Endothelial cell of umbilical vein (primary cell): ENCODE measurements at regions of chr4 and their contacts with region 1.

Region 1: DNA sequence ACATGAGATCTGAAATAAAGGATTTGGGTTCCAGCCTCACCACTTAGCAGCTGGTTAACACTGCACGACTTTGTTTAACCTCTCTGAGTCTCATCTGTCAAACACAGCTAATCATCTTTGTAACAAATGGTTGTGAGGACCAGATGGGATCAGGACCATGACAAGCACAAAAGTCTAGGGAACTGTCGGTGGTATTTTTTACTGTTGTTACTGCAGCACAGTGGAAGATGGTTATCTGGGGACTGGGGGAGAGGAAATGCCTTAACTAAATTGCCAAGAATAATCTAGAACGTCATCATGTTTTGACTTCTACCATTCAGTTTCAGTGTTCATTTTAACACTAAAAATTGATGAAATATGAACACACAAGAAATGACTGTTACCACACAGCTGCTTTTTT is 99.5 kb downstream of the ADGRA3 start:
- DNase-seq: peak; percentile 82
- H3K4me3 ChIP-seq: no peak overlapping the region
- H3K27ac ChIP-seq: peak overlapping the region; percentile 30
- H3K4me1 ChIP-seq: peaks cover 12% of the 10 kb centered on the region
- H3K27me3 ChIP-seq: no peaks in the 10 kb centered on the region
- CTCF ChIP-seq: no peak
- POLR2A ChIP-seq: no peak

Region 2: DNA sequence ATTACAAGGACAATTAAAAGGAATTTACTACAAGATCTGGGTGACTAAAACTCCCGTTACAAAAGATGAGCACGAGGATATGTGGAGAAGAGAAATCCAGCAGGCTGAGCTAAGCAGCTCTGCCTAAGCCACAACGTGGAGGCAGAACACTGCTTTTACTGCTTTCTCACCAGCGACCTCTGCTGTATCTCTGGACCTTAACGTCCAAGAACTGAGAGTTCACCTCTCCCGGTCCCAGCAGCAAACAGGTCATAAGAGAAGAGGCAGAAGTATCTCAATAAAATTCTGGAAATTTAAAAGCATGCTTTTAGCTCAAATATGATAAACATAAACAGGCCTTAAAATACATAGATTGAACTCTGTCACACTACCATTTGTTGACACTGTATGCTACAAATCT is 18.5 kb after region 1 on chr4:
- CTCF ChIA-PET with region 1: interaction called, 18 read pairs
- POLR2A ChIA-PET with region 1: no interaction called
- dilution Hi-C with region 1: no loop called
- intact Hi-C with region 1: loop called (anchors 2 kb)
- DNase-seq: peak; percentile 61
- H3K4me3 ChIP-seq: no peak overlapping the region
- H3K27ac ChIP-seq: no peak overlapping the region
- H3K4me1 ChIP-seq: no peaks in the 10 kb centered on the region
- H3K27me3 ChIP-seq: no peaks in the 10 kb centered on the region
- CTCF ChIP-seq: peak; percentile 21 to 57
- POLR2A ChIP-seq: no peak

Region 3: GRCh38 chr4:22607382-22607781 is 191.0 kb after region 1 on chr4:
- CTCF ChIA-PET with region 1: interaction called, 36 read pairs
- POLR2A ChIA-PET with region 1: no interaction called
- dilution Hi-C with region 1: no loop called
- intact Hi-C with region 1: no loop called
- DNase-seq: peak; percentile 29
- H3K4me3 ChIP-seq: no peak overlapping the region
- H3K27ac ChIP-seq: no peak overlapping the region
- H3K4me1 ChIP-seq: no peaks in the 10 kb centered on the region
- H3K27me3 ChIP-seq: no peaks in the 10 kb centered on the region
- CTCF ChIP-seq: peak; percentile 10 to 54
- POLR2A ChIP-seq: no peak